Lower leg skin (tissue), 4 donors: ENCODE measurements at regions of chr3 and their contacts with region 1.

Region 1: DNA sequence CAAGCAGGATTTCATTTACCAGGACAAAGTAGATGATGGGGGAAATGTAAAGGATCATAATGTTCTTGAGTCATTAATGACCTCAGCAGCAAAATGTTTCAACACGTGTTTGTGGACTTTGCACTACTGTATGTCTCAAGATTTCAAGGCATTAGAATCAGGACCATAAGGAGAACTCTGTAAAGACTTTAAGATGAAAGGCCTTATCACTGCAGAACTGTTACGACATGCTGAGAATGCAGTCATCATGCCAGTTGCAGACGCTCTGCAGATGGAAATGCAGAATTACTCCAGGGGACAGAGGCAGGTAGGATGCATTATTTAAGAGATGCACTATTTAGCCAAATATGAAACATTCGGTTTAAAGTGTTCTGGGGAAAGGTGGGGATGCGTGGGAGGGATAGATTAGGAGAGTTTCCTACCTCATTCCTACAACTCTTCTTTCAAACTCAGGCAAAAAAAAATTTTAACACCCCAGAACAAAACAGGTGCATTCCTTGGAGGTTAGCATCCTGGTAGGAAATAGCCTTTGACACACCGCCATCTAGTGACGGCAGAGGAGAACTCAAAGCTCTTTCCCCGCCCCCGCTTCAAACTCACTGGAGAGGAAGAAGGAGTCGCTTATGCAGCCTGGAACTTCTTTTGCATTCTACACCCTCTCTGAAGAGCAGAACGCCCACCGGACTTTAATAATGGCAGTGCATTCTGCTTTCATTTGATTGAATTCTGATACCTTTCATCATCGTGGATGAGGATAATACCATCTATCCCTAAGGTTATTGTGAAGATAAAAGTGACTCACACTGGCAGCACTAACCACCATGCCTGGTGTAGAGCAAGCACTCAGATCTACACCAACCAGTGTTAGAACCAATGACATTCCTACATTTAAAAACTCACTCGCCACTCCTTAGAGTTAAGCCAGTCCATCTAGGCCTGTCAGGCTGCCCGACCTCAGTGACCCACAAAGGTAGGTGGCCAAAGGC is 43.1 kb upstream of the TOPAZ1 start:
- DNase-seq: peak; percentile 78 to 91
- H3K4me3 ChIP-seq: no peak overlapping the region
- CTCF ChIP-seq: no peak
- POLR2A ChIP-seq: no peak

Region 2: DNA sequence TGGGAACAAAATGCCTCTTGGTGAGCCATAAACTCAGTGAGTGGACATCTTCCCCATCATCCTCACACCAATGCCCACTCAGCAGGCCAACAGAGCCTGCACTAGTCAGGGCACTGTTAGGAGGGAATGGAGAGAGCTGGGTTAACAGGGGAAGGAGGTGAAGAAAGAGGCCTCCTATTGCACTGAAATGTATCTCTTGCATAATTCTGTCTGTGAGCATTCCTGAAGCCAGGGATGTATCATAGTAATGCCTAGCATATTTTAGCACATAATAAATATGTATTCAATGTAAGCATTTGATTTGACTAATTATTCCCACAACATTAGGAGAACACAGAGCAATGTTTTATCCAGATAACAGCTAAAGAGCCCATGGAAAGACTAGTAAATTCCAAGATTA is 658.0 kb before region 1 on chr3:
- intact Hi-C with region 1: loop called (anchors 5 kb)
- DNase-seq: no peak
- H3K4me3 ChIP-seq: no peak overlapping the region
- CTCF ChIP-seq: no peak
- POLR2A ChIP-seq: no peak